IMR-90 (cell line): ENCODE measurements at regions of chr19 and their contacts with region 1.

Region 1: GRCh38 chr19:32580901-32581703 is at the start of gene PDCD5:
- DNase-seq: peak; percentile 89
- ATAC-seq: peak; percentile 98
- H3K4me3 ChIP-seq: peak within 1 kb of the TSS; percentile 81
- H3K27ac ChIP-seq: peak within 1 kb of the TSS; percentile 95
- H3K4me1 ChIP-seq: peaks cover 2% of the 10 kb centered on the region; the same call in 1 of the 2 replicates
- H3K27me3 ChIP-seq: no peaks in the 10 kb centered on the region
- CTCF ChIP-seq: no peak
- POLR2A ChIP-seq: peak; percentile 81
- RAD21 ChIP-seq: no peak
- total RNA-seq, gene PDCD5: 30.6 and 123 TPM in 2 replicates

Region 2: DNA sequence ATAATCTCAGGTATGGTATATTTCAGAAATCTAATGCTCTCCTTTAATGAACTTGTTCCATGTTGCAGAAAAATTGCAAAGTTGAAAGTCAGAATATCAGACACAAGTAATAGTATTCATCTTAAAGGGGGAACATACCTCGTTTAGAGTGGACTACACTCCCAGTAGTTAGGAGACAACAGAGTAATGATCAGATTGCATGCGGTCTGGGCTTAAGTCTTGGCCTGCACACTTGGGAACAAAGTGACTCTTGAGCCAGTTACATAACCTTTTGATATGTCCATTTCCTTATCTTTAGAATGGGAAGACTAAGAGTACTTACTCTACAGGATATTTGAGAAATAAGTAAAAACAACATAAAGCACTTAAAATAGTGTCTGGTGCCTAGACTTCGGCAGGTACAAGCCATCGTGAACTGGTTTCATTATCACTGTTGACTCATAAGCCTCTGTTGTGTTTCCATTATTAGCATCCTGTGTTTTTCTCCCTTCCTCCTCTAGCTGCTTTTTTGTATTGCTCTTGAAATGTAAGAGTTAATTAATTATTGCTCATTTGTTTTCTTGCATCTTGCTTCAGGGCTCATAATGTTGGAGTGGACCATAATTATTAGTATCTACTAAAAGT is 122.5 kb before region 1 on chr19:
- CTCF ChIA-PET with region 1: interaction called, 3 read pairs
- POLR2A ChIA-PET with region 1: no interaction called
- dilution Hi-C with region 1: no loop called
- in situ Hi-C with region 1: no loop called
- intact Hi-C with region 1: loop called (anchors 10 kb)
- DNase-seq: no peak
- ATAC-seq: no peak
- H3K4me3 ChIP-seq: no peak overlapping the region
- H3K27ac ChIP-seq: no peak overlapping the region
- H3K4me1 ChIP-seq: no peaks in the 10 kb centered on the region
- H3K27me3 ChIP-seq: no peaks in the 10 kb centered on the region
- CTCF ChIP-seq: no peak
- POLR2A ChIP-seq: no peak
- RAD21 ChIP-seq: no peak

Region 3: DNA sequence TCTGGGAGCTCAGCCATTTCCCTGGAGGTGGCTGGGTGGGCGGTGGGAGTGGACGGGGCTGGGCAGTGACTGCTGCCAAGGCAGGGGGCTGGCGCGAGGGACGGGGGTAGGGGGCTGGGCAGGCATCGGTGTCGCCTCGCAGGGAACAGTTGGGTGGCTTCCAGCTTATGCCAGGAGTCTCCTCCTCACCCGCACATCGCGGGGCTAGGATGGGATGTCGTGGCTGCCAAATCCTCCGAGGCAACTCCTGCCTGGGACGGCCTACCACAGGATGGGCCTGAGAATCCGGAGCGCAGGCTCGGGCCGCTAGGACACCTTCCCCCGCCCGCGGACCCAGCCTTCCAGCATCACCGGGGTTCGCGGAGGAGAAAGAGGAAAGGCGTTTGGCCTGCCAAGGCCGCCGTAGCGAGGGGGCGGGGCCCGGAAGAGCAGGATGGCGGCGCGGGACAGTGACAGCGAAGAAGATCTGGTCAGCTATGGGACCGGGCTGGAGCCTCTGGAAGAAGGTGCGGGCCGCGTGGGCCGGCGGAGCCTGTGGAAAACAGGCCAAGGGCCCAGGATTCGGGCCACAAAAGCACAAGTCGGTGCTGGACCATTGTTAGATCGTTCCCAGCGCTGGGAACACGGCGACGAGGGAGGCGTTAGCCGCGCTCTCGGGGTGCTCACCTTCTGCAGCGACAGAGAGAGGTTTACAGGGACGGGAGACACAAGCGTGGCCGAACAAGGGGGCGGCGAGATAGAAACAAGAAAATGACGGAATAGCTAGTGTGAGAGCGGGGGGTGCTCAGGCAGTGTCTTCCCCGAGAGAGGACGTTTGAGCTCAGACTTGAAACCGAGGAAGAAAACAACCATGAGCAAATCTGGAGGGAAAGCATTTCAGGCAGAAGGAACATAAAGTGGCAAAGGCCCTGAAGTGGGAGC is 499.9 kb after region 1 on chr19 and contains the start of gene GPATCH1:
- CTCF ChIA-PET with region 1: no interaction called
- POLR2A ChIA-PET with region 1: no interaction called
- dilution Hi-C with region 1: no loop called
- in situ Hi-C with region 1: no loop called
- intact Hi-C with region 1: loop called (anchors 10 kb)
- DNase-seq: peak; percentile 73
- ATAC-seq: peak; percentile 89
- H3K4me3 ChIP-seq: peak within 1 kb of the TSS; percentile 93
- H3K27ac ChIP-seq: peak within 1 kb of the TSS; percentile 90
- H3K4me1 ChIP-seq: peaks cover 3% of the 10 kb centered on the region; the same call in 1 of the 2 replicates
- H3K27me3 ChIP-seq: no peaks in the 10 kb centered on the region
- CTCF ChIP-seq: no peak
- POLR2A ChIP-seq: no peak
- RAD21 ChIP-seq: no peak
- total RNA-seq, gene GPATCH1: 7.5 and 8.3 TPM in 2 replicates